Activated CD4-positive, alpha-beta T cell treated with anti-CD3 and anti-CD28 coated beads for 36 hours (primary cell): ENCODE measurements at regions of chr17 and their contacts with region 1.

Region 1: GRCh38 chr17:50200457-50201275 is 765 bp downstream of the COL1A1 start:
- DNase-seq: peak; percentile 91
- ATAC-seq: peak; percentile 81
- H3K4me3 Mint-ChIP-seq: peak overlapping the region; percentile 53
- H3K27ac Mint-ChIP-seq: no peak overlapping the region
- H3K4me1 Mint-ChIP-seq: peaks cover 16% of the 10 kb centered on the region
- H3K27me3 Mint-ChIP-seq: peaks cover 43% of the 10 kb centered on the region

Region 2: DNA sequence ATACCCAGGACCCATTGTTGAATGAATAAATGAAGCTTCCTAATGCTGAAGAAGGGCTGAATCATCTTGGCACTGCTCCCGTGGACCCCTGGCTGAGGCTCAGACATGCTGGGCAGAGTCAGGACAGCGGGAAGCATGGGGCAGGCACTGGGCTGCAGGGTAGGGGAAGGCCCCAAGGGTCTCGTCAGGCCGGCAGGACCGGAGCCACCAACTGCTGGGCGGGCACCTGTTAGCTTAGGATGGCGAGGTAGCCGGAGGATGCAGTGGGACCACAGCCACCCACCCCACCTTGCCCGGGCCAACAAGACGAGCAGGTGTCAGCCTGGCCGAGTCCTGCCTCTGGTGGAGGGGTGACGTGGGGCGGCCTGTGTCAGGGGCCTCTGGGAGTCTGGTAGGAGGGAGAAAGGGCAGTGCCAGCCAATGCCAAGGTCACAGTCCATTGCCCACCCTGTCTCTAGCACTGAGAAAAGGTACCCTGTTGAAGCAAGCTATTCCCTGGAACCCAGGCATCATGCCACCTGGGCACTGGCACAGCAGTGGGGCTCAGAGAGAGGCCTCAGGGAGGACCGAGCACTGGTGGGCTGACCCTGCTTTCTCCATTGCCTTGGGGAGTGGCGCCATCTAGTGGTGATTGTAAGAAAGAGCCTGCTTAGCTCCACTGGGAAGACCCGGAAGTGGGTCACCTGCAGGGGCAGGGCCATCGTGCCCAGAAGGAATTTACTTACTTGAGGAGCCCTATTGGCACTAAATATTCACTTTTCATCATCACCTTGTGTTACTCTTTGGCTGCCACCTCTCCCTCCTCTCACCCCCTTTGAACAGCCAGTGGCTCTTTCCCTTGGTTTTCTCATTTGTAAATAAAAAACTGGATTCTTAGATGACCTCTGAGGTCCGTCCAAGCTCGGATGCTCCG is 202.6 kb before region 1 on chr17:
- CTCF ChIA-PET with region 1: no interaction called
- POLR2A ChIA-PET with region 1: no interaction called
- intact Hi-C with region 1: no loop called
- DNase-seq: peak; percentile 92
- ATAC-seq: peak; percentile 86
- H3K4me3 Mint-ChIP-seq: no peak overlapping the region
- H3K27ac Mint-ChIP-seq: no peak overlapping the region
- H3K4me1 Mint-ChIP-seq: peaks cover 23% of the 10 kb centered on the region
- H3K27me3 Mint-ChIP-seq: peaks cover 56% of the 10 kb centered on the region

Region 3: DNA sequence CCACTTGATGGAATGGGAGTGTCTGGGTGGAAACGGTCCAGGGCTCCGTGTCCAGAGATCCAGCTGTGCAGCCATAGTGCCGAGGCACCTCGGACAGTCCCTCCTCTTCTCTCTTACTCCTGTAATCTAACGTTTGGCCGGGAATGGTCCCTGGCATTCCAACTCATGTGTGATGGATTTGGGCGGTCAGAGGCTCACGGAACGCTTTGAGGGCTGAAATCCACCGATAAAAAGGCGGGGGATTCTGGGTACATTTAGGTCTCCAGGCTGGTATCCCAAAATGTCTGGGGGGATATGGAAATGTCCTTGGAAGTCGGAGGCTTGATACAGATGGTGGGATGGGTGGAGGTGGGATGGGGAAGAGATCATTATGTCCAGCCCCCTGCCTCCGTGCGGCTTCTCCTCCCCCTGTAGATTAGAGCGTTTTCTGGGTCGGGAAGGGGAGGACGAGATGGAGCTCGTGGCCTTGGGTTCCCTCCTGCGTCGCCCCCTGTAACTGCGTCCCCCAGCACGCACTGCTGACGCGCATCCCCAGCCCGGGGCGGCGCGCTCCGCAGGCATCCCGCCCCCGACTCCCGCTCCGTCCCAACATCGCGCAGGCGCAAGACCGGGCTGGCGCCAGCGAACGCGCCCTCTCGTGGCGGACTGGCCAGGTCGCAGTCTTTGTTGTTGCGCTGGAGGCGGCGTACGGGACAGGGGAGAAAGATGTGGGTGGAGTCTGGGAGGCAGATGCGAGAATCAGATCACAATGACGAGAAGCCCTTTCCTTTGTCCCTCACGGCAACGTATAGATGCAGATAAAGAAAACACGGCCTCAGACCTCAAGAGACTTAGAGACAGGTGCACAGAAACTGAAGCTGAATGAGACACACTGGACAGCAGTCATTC is 39.4 kb before region 1 on chr17:
- CTCF ChIA-PET with region 1: interaction called, 12 read pairs
- POLR2A ChIA-PET with region 1: no interaction called
- intact Hi-C with region 1: no loop called
- DNase-seq: peak; percentile 98
- ATAC-seq: peak; percentile 96
- H3K4me3 Mint-ChIP-seq: peak overlapping the region; percentile 78
- H3K27ac Mint-ChIP-seq: peak overlapping the region; percentile 99
- H3K4me1 Mint-ChIP-seq: peaks cover 42% of the 10 kb centered on the region
- H3K27me3 Mint-ChIP-seq: no peaks in the 10 kb centered on the region

Region 4: GRCh38 chr17:50213026-50214022 is 12.7 kb after region 1 on chr17:
- CTCF ChIA-PET with region 1: interaction called, 90 read pairs
- POLR2A ChIA-PET with region 1: interaction called, 3 read pairs
- intact Hi-C with region 1: no loop called
- DNase-seq: peak; percentile 81
- ATAC-seq: peak; percentile 99
- H3K4me3 Mint-ChIP-seq: no peak overlapping the region
- H3K27ac Mint-ChIP-seq: no peak overlapping the region
- H3K4me1 Mint-ChIP-seq: peaks cover 16% of the 10 kb centered on the region
- H3K27me3 Mint-ChIP-seq: peaks cover 4% of the 10 kb centered on the region

Region 5: GRCh38 chr17:50258647-50259476 is 58.2 kb after region 1 on chr17:
- CTCF ChIA-PET with region 1: no interaction called
- POLR2A ChIA-PET with region 1: no interaction called
- intact Hi-C with region 1: no loop called
- DNase-seq: no peak
- ATAC-seq: no peak
- H3K4me3 Mint-ChIP-seq: no peak overlapping the region
- H3K27ac Mint-ChIP-seq: no peak overlapping the region
- H3K4me1 Mint-ChIP-seq: no peaks in the 10 kb centered on the region
- H3K27me3 Mint-ChIP-seq: peaks cover 7% of the 10 kb centered on the region

Region 6: DNA sequence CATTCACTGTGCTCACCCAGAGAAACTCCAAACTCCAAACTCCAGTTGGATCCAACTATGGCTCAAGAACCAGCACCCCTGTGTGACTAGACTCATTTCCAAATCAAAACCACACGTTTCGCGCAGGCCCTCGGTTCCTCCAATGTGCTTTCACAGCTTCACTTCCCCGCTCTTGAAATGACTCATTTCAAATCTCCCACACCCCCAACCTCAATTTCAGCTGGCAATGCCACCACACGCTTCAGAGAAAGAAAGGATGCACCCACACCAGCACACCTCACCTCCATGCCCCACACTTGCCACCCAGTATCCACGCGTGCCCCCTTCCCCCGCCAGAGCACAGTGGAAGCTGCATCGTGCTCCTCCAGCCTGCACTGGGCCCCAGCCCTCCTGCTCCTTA is 82.6 kb after region 1 on chr17:
- CTCF ChIA-PET with region 1: interaction called, 200 read pairs
- POLR2A ChIA-PET with region 1: no interaction called
- intact Hi-C with region 1: no loop called
- DNase-seq: peak; percentile 74
- ATAC-seq: peak; percentile 80
- H3K4me3 Mint-ChIP-seq: no peak overlapping the region
- H3K27ac Mint-ChIP-seq: no peak overlapping the region
- H3K4me1 Mint-ChIP-seq: peaks cover 13% of the 10 kb centered on the region
- H3K27me3 Mint-ChIP-seq: peaks cover 18% of the 10 kb centered on the region

Region 7: DNA sequence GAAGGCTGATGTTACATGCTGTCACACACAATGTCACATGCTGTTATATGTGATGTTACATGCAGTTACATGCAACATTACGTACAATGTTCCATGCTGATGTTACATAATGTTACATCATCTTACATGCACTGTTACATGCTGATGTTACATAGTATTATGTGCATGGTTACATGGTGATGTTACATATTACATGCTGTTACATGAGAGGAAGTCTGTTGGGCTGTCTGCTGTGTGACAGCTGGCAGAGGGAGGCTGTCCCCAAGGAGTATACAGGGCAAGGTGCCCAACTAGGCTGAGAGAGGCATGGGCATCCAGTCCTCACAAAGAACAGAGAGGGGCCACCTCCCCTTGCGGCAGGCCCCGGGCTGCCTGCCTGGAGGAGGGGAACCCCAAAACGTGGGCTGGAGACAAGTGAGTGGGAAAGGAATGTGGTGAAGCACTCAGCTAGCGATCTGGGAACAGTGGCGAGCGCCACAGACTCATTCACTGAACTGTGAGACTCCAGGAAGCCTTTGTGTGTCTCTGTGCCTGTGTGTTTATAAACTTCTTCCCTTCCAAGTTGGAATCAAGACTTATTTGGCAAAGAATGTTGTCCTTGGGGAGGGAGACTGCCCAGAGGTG is 104.2 kb after region 1 on chr17:
- CTCF ChIA-PET with region 1: interaction called, 200 read pairs
- POLR2A ChIA-PET with region 1: no interaction called
- intact Hi-C with region 1: no loop called
- DNase-seq: peak; percentile 31
- ATAC-seq: no peak
- H3K4me3 Mint-ChIP-seq: no peak overlapping the region
- H3K27ac Mint-ChIP-seq: no peak overlapping the region
- H3K4me1 Mint-ChIP-seq: peaks cover 21% of the 10 kb centered on the region
- H3K27me3 Mint-ChIP-seq: peaks cover 6% of the 10 kb centered on the region

Region 8: GRCh38 chr17:50345432-50346312 is 145.0 kb after region 1 on chr17 and contains the start of gene XYLT2:
- CTCF ChIA-PET with region 1: interaction called, 4 read pairs
- POLR2A ChIA-PET with region 1: no interaction called
- intact Hi-C with region 1: loop called in 1 of 2 experiments (anchors 1 kb)
- DNase-seq: peak; percentile 95
- ATAC-seq: peak; percentile 91
- H3K4me3 Mint-ChIP-seq: peak within 1 kb of the TSS; percentile 90
- H3K27ac Mint-ChIP-seq: peak within 1 kb of the TSS; percentile 94
- H3K4me1 Mint-ChIP-seq: peaks cover 32% of the 10 kb centered on the region
- H3K27me3 Mint-ChIP-seq: no peaks in the 10 kb centered on the region
- total RNA-seq, gene XYLT2: 29.8 to 30.4 TPM